T-cell (primary cell): ENCODE measurements at regions of chr13 and their contacts with region 1.

Region 1: DNA sequence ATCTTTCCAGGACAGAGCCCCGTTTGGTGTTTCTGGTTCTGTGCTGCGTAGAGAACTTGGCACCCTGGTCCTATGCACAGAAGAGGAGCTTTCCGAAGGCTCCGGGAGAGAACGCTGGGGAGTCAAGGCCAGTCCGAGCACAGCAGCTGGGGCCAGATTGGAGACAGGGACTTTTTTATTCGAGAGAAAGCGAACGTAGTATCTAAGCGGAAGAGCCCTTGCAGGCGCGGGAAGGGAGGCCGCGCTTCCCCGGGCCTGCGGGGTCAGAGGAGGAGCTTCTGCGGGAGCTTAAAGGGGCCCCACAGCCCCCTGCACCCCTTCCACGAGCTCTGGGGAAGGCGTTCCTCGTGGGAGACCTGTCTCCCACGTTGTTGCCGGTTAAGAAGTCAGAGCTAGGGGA is 48.6 kb upstream of the ARHGEF7 start:
- DNase-seq: no peak
- ATAC-seq: no peak
- H3K4me3 ChIP-seq: peak overlapping the region in 1 of 2 donors; percentile 64
- H3K4me3 Mint-ChIP-seq: peak overlapping the region; percentile 62 to 80 (median 66)
- H3K27ac ChIP-seq: no peak overlapping the region
- H3K27ac Mint-ChIP-seq: peak overlapping the region in 1 of 2 donors; percentile 51
- H3K4me1 ChIP-seq: peaks cover 0 to 14% of the 10 kb centered on the region in 2 experiments
- H3K4me1 Mint-ChIP-seq: peaks cover 7 to 8% (median 7%) of the 10 kb centered on the region in 3 donors
- H3K27me3 ChIP-seq: peaks cover 4 to 48% of the 10 kb centered on the region in 2 experiments
- H3K27me3 Mint-ChIP-seq: peaks cover 60 to 65% of the 10 kb centered on the region in 2 donors

Region 2: DNA sequence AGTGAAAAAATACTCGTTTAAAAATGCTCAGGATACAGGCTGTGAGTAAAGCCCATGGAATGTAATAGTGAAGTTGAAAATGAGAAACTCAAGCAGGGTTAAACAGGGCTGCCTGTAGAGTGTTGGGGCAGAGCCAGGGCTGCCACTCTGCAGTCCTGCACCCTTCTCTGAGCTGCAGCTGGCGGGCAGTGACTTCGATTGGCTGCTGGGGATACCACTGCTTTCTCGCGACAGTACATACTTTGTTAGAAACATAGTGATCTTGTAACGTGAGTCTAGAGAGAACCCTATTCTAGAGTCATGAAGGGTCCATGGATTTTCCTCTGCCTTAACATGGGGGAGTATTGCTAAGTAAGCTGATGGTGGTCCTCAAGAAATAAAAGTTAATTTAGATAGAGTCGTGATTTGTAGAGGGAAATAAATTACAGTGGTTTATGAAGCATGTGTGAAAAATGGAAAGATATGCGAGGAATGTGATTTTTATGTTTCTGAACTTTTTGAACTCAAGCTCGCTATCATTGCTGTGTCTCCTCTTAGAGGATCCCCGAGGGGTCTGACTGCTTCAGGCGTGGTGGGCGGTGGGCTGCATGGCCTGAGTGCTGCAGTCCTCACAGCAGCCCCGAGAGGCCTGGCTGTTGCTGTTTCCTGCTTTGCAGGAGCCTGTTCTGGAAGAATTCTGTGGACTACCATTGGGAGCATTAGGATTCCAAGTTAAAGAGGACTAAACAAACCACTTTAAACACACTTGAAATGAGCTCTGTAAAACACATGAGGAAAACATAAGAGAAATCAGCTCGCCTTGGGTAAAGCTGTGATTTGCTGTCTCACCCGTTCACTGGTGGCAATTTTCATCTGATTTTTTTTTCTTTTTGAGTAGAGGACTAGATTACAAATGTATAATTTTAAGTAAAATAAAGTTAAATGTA is 144.3 kb after region 1 on chr13:
- CTCF ChIA-PET with region 1: interaction called, 33 to 44 read pairs
- POLR2A ChIA-PET with region 1: no interaction called
- DNase-seq: no peak
- ATAC-seq: no peak
- H3K4me3 ChIP-seq: no peak overlapping the region
- H3K4me3 Mint-ChIP-seq: no peak overlapping the region
- H3K27ac ChIP-seq: no peak overlapping the region
- H3K27ac Mint-ChIP-seq: peak overlapping the region in 1 of 2 donors; percentile 64
- H3K4me1 ChIP-seq: peaks cover 10 to 15% of the 10 kb centered on the region in 2 experiments
- H3K4me1 Mint-ChIP-seq: peaks cover 69 to 83% (median 79%) of the 10 kb centered on the region in 3 donors
- H3K27me3 ChIP-seq: no peaks in the 10 kb centered on the region
- H3K27me3 Mint-ChIP-seq: no peaks in the 10 kb centered on the region

Region 3: GRCh38 chr13:111216166-111216960 is 149.8 kb after region 1 on chr13:
- CTCF ChIA-PET with region 1: interaction called, 33 to 44 read pairs
- POLR2A ChIA-PET with region 1: no interaction called
- DNase-seq: peak in 29 of 35 experiments; percentile 9 to 65 (median 35)
- ATAC-seq: peak; percentile 57 to 75 (median 68)
- H3K4me3 ChIP-seq: no peak overlapping the region
- H3K4me3 Mint-ChIP-seq: no peak overlapping the region
- H3K27ac ChIP-seq: no peak overlapping the region
- H3K27ac Mint-ChIP-seq: no peak overlapping the region
- H3K4me1 ChIP-seq: peaks cover 2 to 15% of the 10 kb centered on the region in 2 experiments
- H3K4me1 Mint-ChIP-seq: peaks cover 52 to 58% (median 52%) of the 10 kb centered on the region in 3 donors
- H3K27me3 ChIP-seq: no peaks in the 10 kb centered on the region
- H3K27me3 Mint-ChIP-seq: no peaks in the 10 kb centered on the region

Region 4: GRCh38 chr13:111225810-111226546 is 159.4 kb after region 1 on chr13:
- CTCF ChIA-PET with region 1: interaction called, 18 to 35 read pairs
- POLR2A ChIA-PET with region 1: no interaction called
- DNase-seq: no peak
- ATAC-seq: peak in 1 of 4 experiments; percentile 19
- H3K4me3 ChIP-seq: no peak overlapping the region
- H3K4me3 Mint-ChIP-seq: peak overlapping the region in 1 of 3 donors; percentile 10
- H3K27ac ChIP-seq: no peak overlapping the region
- H3K27ac Mint-ChIP-seq: no peak overlapping the region
- H3K4me1 ChIP-seq: peaks cover 0 to 6% of the 10 kb centered on the region in 2 experiments
- H3K4me1 Mint-ChIP-seq: peaks cover 32 to 36% (median 34%) of the 10 kb centered on the region in 3 donors
- H3K27me3 ChIP-seq: no peaks in the 10 kb centered on the region
- H3K27me3 Mint-ChIP-seq: no peaks in the 10 kb centered on the region